ENCODE measurements at regions of chr11 and their contacts with region 1.

Region 1: GRCh38 chr11:65418711-65419459 is 3.7 kb upstream of the NEAT1 start:
- DNase-seq: peak; percentile 99

Region 2: GRCh38 chr11:65366340-65366773 is 52.5 kb before region 1 on chr11:
- intact Hi-C with region 1: loop called (anchors 5 kb)
- DNase-seq: no peak

Region 3: GRCh38 chr11:65382033-65382807 is 36.7 kb before region 1 on chr11 and contains the start of gene SLC25A45:
- intact Hi-C with region 1: loop called (anchors 2 kb)
- DNase-seq: peak; percentile 97
- total RNA-seq, gene SLC25A45: 10.5 TPM

Region 4: DNA sequence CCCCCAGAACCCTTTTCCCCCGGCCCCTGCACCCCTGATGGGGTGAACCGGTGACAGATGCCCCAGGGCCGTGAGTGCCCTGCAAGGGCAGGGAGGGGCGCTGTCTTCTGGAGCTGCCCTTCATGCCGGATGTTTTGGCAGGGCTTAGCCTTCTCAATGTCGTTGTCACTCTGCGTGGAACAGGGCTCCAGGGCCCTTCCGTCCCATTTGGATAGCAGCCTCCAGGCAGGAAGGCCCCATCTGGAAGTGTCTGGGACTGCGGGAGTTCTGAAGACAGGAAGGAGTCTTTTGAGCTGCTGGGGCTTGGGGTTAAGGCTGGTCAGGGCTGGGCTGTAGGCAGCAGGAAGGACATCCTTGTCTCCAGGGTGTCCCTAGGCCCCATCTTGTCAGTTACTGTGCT is 27.9 kb before region 1 on chr11:
- intact Hi-C with region 1: loop called (anchors 2 kb)
- DNase-seq: no peak

Region 5: GRCh38 chr11:65471410-65471762 is 52.5 kb after region 1 on chr11:
- intact Hi-C with region 1: loop called (anchors 1 kb)
- DNase-seq: peak; percentile 89

Region 6: GRCh38 chr11:65497141-65498041 is 78.5 kb after region 1 on chr11:
- intact Hi-C with region 1: loop called (anchors 1 kb)
- DNase-seq: peak; percentile 99

Region 7: GRCh38 chr11:65506770-65507505 is 88.1 kb after region 1 on chr11:
- intact Hi-C with region 1: loop called (anchors 1 kb)
- DNase-seq: peak; percentile 75